Activated B cell treated with CpG ODN at 0.5 μM for 24 hours (primary cell): ENCODE measurements at regions of chr15 and their contacts with region 1.

Region 1: GRCh38 chr15:43329960-43330779 is at the start of gene LCMT2:
- DNase-seq: peak; percentile 85
- ATAC-seq: peak; percentile 85
- H3K4me3 Mint-ChIP-seq: peak within 1 kb of the TSS; percentile 97
- H3K27ac Mint-ChIP-seq: peak within 1 kb of the TSS; percentile 99
- H3K4me1 Mint-ChIP-seq: peaks cover 32% of the 10 kb centered on the region
- H3K27me3 Mint-ChIP-seq: no peaks in the 10 kb centered on the region
- CTCF ChIP-seq: no peak
- total RNA-seq, gene LCMT2: 15.5 and 17.1 TPM in 2 replicates

Region 2: DNA sequence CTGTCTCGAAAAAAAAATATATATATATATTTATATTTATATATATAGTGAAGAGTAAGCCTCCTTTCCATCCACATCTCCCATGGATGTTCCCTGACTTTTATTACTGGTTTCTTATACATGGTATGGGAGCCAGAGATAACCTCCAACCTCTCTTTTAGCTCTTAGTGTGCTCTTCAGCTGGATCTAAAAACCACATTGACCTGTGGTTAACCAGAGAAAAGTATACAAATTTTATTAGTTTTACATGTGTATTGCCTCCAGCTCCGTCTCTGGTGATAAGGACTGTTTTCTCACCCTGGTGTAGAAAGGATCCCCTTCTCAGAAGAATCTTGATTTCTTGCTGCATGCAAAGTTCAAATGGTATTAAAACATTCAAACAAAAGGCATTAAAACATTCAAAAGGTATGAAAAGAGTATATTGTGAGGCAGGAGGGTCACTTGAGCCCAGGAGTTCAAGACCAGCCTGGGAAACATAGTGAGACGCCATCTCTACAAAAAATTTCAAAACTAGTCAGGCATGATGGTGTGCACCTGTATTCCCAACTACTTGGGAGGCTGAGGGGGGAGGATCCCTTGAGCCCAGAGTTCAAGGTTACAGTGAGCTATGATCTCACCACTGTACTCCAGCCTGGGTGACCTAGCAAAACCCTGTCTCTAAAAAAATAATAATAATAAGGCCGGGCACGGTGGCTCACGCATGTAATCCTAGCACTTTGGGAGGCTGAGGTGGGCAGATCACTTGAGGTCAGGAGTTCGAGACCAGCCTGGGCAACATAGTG is 396.1 kb before region 1 on chr15:
- CTCF ChIA-PET with region 1: no interaction called
- POLR2A ChIA-PET with region 1: no interaction called
- intact Hi-C with region 1: no loop called
- DNase-seq: no peak
- ATAC-seq: no peak
- H3K4me3 Mint-ChIP-seq: no peak overlapping the region
- H3K27ac Mint-ChIP-seq: no peak overlapping the region
- H3K4me1 Mint-ChIP-seq: no peaks in the 10 kb centered on the region
- H3K27me3 Mint-ChIP-seq: no peaks in the 10 kb centered on the region
- CTCF ChIP-seq: no peak

Region 3: GRCh38 chr15:43093026-43093425 is 237.1 kb before region 1 on chr15:
- CTCF ChIA-PET with region 1: no interaction called
- POLR2A ChIA-PET with region 1: no interaction called
- intact Hi-C with region 1: no loop called
- DNase-seq: no peak
- ATAC-seq: no peak
- H3K4me3 Mint-ChIP-seq: no peak overlapping the region
- H3K27ac Mint-ChIP-seq: no peak overlapping the region
- H3K4me1 Mint-ChIP-seq: peaks cover 51% of the 10 kb centered on the region
- H3K27me3 Mint-ChIP-seq: no peaks in the 10 kb centered on the region
- CTCF ChIP-seq: no peak

Region 4: DNA sequence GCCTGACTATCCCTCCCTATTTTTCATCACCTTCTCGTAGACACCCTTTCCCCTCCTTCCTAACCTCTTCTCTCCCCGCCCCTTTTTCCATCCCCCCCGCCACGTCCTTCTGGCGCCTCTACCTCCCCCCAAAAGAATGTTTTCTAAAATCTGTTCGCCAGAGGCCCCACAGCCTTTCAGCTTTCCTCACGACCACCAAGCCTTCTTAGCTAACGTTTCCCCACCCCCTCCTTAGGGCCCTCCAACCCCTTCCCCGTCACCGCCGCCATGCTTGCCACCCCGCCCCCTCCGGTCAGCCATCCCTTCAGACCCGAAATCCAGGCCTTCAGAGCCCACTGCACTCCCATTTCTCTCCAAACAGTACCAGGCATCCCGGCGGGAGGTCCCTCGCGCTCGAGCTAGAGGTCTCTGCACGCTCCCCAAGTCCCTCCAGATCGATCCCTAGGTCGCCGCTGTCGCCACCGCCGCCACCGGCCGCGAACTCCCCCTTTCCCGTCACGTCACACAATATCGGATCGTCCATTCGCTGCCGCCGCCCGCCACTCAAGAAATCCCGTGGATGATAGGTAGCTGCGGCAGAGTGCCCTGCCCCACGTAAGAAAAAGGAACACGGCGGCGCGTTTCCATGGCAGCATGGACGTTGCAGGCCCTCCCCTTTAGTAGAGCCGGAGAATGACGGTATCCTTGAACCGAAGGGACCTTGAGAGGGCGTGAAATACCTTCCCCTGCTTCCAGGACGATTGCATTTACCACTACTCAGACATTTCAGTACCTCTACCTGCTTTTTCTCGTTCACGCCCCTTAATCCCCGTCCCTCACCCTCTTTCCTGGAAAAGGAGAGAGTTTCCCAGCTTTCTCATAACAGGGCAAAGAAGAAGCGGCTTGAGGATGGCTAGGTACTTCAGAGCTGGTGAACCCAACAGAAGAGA is 162.8 kb after region 1 on chr15 and contains the start of gene TP53BP1:
- CTCF ChIA-PET with region 1: no interaction called
- POLR2A ChIA-PET with region 1: no interaction called
- intact Hi-C with region 1: loop called (anchors 5 kb)
- DNase-seq: peak; percentile 87
- ATAC-seq: peak; percentile 99
- H3K4me3 Mint-ChIP-seq: peak within 1 kb of the TSS; percentile 98
- H3K27ac Mint-ChIP-seq: peak within 1 kb of the TSS; percentile 95
- H3K4me1 Mint-ChIP-seq: peaks cover 19% of the 10 kb centered on the region
- H3K27me3 Mint-ChIP-seq: no peaks in the 10 kb centered on the region
- CTCF ChIP-seq: no peak
- total RNA-seq, gene TP53BP1: 53.9 and 54.6 TPM in 2 replicates